Posterior vena cava (tissue), 2 donors: ENCODE measurements at regions of chr19 and their contacts with region 1.

Region 1: GRCh38 chr19:48437511-48437910 is 8.3 kb upstream of the GRWD1 start:
- DNase-seq: no peak

Region 2: DNA sequence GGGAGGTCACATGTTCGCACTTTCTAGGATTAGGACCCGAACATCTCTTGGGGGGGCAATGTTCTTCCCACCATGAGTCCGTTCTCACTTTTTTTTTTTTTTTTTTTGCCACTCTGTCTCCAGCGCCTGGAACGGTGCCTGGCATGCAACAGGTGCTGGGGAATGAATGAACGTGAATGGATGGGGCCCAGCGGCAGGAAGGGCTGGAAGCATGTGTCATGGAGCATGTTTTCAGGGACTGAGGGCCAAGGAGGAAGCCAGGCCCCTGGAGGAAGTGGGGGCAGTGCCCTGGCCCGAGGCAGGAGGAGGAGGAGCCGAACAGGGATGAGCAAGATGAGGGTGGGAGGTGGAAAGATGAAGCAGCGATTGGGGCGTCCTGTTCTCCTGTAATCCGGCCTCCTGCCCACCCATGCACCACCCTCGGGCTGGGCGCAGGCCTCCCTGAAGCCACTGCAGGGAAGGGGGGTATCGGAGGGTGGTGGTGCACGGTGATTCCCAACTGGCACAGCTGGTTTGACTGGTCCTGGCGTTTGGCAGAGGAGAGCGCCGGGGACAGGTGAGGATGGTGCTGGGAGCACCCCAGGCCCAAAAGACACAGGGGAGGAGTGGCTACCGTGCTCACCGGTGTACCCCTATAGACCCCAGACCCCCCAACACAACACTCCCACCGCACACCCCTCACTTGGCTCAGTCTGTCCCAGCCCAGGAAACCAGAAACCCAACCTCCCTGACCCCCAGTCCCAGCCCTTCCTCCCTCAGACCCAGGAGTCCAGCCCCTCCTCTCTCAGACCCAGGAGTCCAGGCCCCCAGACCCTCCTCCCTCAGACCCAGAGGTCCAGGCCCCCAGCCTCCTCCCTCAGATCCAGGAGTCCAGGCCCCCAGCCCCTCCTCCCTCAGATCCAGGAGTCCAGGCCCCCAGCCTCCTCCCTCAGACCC is 105.9 kb after region 1 on chr19:
- intact Hi-C with region 1: no loop called
- DNase-seq: no peak

Region 3: GRCh38 chr19:49801966-49802690 is 1364.6 kb after region 1 on chr19:
- intact Hi-C with region 1: loop called in 1 of 2 experiments (anchors 5 kb)
- DNase-seq: peak; percentile 96